Right lobe of liver (tissue), 6 donors: ENCODE measurements at regions of chr11 and their contacts with region 1.

Region 1: GRCh38 chr11:124415356-124415923 is 9.2 kb downstream of the OR8B4 start:
- DNase-seq: no peak
- ATAC-seq: peak in 3 of 4 donors; percentile 45 to 65 (median 63)
- H3K4me3 ChIP-seq: no peak overlapping the region
- H3K27ac ChIP-seq: no peak overlapping the region
- H3K4me1 ChIP-seq: no peaks in the 10 kb centered on the region
- H3K27me3 ChIP-seq: no peaks in the 10 kb centered on the region
- CTCF ChIP-seq: peak; percentile 39 to 69 (median 60)
- POLR2A ChIP-seq: no peak

Region 2: GRCh38 chr11:124586238-124586860 is 170.9 kb after region 1 on chr11:
- intact Hi-C with region 1: loop called (anchors 10 kb)
- DNase-seq: peak; percentile 30 to 58 (median 51)
- ATAC-seq: peak; percentile 63 to 74 (median 70)
- H3K4me3 ChIP-seq: no peak overlapping the region
- H3K27ac ChIP-seq: no peak overlapping the region
- H3K4me1 ChIP-seq: no peaks in the 10 kb centered on the region
- H3K27me3 ChIP-seq: peaks cover 0 to 4% of the 10 kb centered on the region in 2 donors
- CTCF ChIP-seq: peak; percentile 39 to 68 (median 60)
- POLR2A ChIP-seq: no peak